ENCODE measurements at regions of chr9 and their contacts with region 1.

Region 1: DNA sequence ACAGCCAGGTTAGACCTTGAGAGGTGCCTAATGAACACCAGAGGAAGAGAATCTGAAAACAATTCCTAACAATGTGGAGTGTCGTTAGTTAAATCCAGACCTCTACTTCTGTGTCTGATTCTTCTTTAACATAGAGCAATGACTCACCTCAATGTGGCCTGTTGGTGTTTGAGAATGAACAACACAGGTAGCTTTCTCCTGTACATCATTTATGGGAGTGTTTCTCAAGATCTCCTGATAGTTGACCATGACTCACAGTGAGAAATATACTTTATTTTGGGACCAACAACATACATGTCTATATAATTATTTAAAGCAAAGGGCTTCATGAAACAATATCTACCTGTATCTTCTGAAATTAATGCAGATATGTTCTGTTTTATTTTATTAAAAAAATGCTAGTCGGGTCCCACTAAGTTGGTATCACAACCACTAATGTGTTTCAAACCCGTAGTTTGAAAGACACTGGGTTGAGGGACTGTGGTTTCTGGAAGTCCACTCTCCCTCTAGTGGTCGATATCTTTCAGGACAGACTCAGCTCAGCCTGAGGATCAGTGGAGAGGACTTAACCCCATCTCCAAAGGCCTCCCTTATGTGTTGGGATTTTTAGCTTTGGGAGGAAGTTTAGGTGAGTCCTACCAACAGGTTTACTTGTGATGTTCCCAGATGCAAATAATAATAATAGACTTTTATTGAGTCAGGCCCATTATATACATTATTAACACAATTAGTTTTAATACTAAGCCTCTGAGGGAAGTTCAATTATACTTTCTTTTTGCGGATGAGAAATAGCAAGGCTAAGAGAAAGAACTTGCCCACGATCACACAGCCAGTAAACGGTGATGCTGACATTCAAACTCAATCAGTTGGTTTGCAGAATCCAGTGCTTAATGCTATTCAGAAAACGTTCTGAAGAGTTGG is 70.0 kb upstream of the KLF9 start:
- DNase-seq: no peak
- ATAC-seq: peak; percentile 85
- H3K4me3 Mint-ChIP-seq: no peak overlapping the region
- H3K27ac Mint-ChIP-seq: no peak overlapping the region
- H3K4me1 Mint-ChIP-seq: no peaks in the 10 kb centered on the region
- H3K27me3 Mint-ChIP-seq: peaks cover 16% of the 10 kb centered on the region
- CTCF ChIP-seq: peak; percentile 8

Region 2: DNA sequence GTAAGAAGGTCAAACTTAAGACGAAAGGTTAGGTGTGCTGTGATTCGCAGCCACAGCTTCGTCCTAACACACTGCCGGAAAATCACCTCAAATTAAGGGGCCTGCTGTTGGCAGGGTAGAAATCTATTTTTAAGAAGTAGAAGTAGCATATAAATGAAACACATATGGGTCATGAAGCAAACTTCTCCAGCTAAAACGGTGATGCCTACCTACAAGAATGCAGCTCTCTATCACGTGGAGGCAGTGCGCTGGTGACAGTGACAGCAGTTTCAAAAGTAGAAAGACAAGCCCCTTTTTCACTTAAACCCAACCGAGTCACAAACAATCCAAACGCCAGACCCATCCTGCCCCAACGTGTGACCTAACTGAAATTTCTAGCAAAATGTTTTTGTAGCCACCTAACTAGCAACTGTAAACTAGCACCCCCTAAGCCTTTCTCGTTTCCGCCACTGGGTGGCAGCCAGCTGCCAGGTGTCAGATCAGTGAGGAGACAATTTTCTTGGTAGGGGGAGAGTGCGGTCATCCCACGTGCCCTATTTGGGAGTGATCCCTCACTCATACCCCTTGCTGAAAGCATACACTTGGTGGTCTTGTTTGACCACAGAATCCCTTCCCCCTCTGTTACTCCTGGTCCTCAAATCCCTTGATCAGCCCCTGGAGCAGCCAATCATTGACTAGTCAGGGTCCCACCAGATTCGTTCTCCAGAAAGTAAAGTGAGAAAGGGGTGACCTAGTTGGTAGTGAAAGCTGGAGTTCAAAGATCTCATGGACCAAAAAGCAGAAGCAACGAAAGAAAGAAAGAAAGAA is 512.6 kb before region 1 on chr9:
- CTCF ChIA-PET with region 1: no interaction called
- POLR2A ChIA-PET with region 1: no interaction called
- intact Hi-C with region 1: loop called (anchors 5 kb)
- DNase-seq: peak; percentile 17
- ATAC-seq: no peak
- H3K4me3 Mint-ChIP-seq: no peak overlapping the region
- H3K27ac Mint-ChIP-seq: no peak overlapping the region
- H3K4me1 Mint-ChIP-seq: no peaks in the 10 kb centered on the region
- H3K27me3 Mint-ChIP-seq: peaks cover 16% of the 10 kb centered on the region
- CTCF ChIP-seq: no peak

Region 3: DNA sequence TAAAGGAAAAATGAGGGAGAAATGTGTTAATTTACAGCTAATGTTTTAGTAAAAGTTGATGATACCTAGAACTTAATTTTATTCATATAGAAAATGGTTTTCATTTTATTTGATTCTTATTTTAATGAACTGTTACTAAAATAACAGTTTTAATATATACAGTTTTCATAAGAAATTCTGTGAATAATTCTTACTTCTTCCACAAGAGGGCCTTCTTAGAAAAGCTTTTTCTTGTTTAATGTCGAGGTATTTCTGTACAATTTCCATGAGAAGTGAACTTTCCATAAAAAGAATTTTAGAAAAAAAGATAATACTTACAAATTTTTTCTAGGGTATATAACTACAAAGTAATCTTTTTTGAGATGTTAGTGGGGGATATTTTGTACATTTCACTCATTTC is 143.9 kb before region 1 on chr9:
- CTCF ChIA-PET with region 1: interaction called, 28 read pairs
- POLR2A ChIA-PET with region 1: no interaction called
- intact Hi-C with region 1: loop called (anchors 1 kb)
- DNase-seq: no peak
- ATAC-seq: no peak
- H3K4me3 Mint-ChIP-seq: no peak overlapping the region
- H3K27ac Mint-ChIP-seq: no peak overlapping the region
- H3K4me1 Mint-ChIP-seq: no peaks in the 10 kb centered on the region
- H3K27me3 Mint-ChIP-seq: no peaks in the 10 kb centered on the region
- CTCF ChIP-seq: no peak

Region 4: DNA sequence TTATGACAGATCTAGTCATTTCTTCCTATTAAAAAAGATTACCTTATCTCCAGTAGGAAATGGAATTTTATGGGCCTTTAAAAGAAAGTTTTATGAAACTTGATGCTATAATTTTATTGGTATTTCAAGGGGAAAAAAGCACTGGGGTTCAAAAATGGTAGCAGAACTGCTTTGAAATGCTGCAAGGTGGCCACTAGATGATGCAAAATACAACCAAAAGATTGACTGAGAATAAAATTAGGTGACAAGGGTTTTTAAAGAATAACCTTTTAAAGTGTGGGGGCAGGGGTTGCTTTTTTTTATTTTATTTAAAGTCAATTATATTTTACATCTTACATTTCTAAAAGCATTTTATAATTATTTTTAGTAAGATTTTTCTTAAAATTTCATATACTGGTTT is 131.7 kb before region 1 on chr9:
- CTCF ChIA-PET with region 1: interaction called, 5 read pairs
- POLR2A ChIA-PET with region 1: no interaction called
- intact Hi-C with region 1: loop called (anchors 1 kb)
- DNase-seq: no peak
- ATAC-seq: no peak
- H3K4me3 Mint-ChIP-seq: no peak overlapping the region
- H3K27ac Mint-ChIP-seq: no peak overlapping the region
- H3K4me1 Mint-ChIP-seq: no peaks in the 10 kb centered on the region
- H3K27me3 Mint-ChIP-seq: no peaks in the 10 kb centered on the region
- CTCF ChIP-seq: no peak

Region 5: DNA sequence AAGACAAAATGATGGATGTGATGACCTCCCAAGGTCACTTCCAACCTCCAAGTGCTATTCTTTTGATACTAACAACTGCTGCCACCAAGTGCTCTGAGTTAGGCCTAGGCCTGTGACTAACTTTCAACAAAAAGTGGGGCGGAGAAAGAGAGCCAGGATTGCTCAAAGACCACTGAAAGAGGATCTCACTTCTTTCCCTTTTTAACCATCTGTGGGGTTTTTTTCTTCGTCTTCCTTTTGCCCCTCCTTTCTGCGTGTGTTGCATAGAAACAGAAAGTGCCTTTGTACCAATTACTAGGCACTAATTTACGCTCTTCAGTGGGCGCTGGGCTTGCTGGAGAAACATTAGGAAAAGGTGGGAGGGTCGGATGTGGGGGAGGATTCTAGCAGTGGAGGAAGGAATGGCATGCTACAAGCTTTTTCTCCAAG is 78.0 kb before region 1 on chr9:
- CTCF ChIA-PET with region 1: interaction called, 6 read pairs
- POLR2A ChIA-PET with region 1: no interaction called
- intact Hi-C with region 1: loop called (anchors 1 kb)
- DNase-seq: no peak
- ATAC-seq: peak; percentile 87
- H3K4me3 Mint-ChIP-seq: peak overlapping the region; percentile 80
- H3K27ac Mint-ChIP-seq: peak overlapping the region; percentile 97
- H3K4me1 Mint-ChIP-seq: peaks cover 64% of the 10 kb centered on the region
- H3K27me3 Mint-ChIP-seq: no peaks in the 10 kb centered on the region
- CTCF ChIP-seq: no peak

Region 6: GRCh38 chr9:70419546-70420266 is 64.8 kb before region 1 on chr9:
- CTCF ChIA-PET with region 1: interaction called, 8 read pairs
- POLR2A ChIA-PET with region 1: no interaction called
- intact Hi-C with region 1: loop called (anchors 1 kb)
- DNase-seq: no peak
- ATAC-seq: peak; percentile 36
- H3K4me3 Mint-ChIP-seq: peak overlapping the region; percentile 95
- H3K27ac Mint-ChIP-seq: peak overlapping the region; percentile 98
- H3K4me1 Mint-ChIP-seq: peaks cover 39% of the 10 kb centered on the region
- H3K27me3 Mint-ChIP-seq: no peaks in the 10 kb centered on the region
- CTCF ChIP-seq: no peak

Region 7: GRCh38 chr9:70563431-70564204 is 79.1 kb after region 1 on chr9:
- CTCF ChIA-PET with region 1: no interaction called
- POLR2A ChIA-PET with region 1: no interaction called
- intact Hi-C with region 1: loop called (anchors 1 kb)
- DNase-seq: peak; percentile 20
- ATAC-seq: peak; percentile 93
- H3K4me3 Mint-ChIP-seq: peak overlapping the region; percentile 72
- H3K27ac Mint-ChIP-seq: peak overlapping the region; percentile 95
- H3K4me1 Mint-ChIP-seq: peaks cover 27% of the 10 kb centered on the region
- H3K27me3 Mint-ChIP-seq: no peaks in the 10 kb centered on the region
- CTCF ChIP-seq: no peak